CD8-positive, alpha-beta T cell (primary cell): ENCODE measurements at regions of chr15 and their contacts with region 1.

Region 1: GRCh38 chr15:75453703-75454470 is 2.4 kb upstream of the SIN3A start:
- DNase-seq: peak; percentile 93 to 100 (median 95)
- ATAC-seq: peak; percentile 39
- H3K4me3 ChIP-seq: peak overlapping the region; percentile 86 to 96
- H3K4me3 Mint-ChIP-seq: peak overlapping the region; percentile 92
- H3K27ac ChIP-seq: peak overlapping the region; percentile 83 to 92
- H3K27ac Mint-ChIP-seq: peak overlapping the region; percentile 99
- H3K4me1 ChIP-seq: peaks cover 23% of the 10 kb centered on the region
- H3K4me1 Mint-ChIP-seq: peaks cover 37% of the 10 kb centered on the region
- H3K27me3 ChIP-seq: no peaks in the 10 kb centered on the region
- H3K27me3 Mint-ChIP-seq: no peaks in the 10 kb centered on the region
- CTCF ChIP-seq: no peak

Region 2: GRCh38 chr15:73927476-73928240 is 1526.2 kb before region 1 on chr15:
- CTCF ChIA-PET with region 1: no interaction called
- POLR2A ChIA-PET with region 1: no interaction called
- intact Hi-C with region 1: loop called in 1 of 2 experiments (anchors 5 kb)
- DNase-seq: peak; percentile 56 to 87 (median 77)
- ATAC-seq: peak; percentile 88
- H3K4me3 ChIP-seq: peak overlapping the region; percentile 49 to 79
- H3K4me3 Mint-ChIP-seq: peak overlapping the region; percentile 79
- H3K27ac ChIP-seq: peak overlapping the region in 1 of 2 experiments; percentile 41
- H3K27ac Mint-ChIP-seq: peak overlapping the region; percentile 20
- H3K4me1 ChIP-seq: peaks cover 27% of the 10 kb centered on the region
- H3K4me1 Mint-ChIP-seq: peaks cover 38% of the 10 kb centered on the region
- H3K27me3 ChIP-seq: no peaks in the 10 kb centered on the region
- H3K27me3 Mint-ChIP-seq: no peaks in the 10 kb centered on the region
- CTCF ChIP-seq: peak; percentile 83

Region 3: DNA sequence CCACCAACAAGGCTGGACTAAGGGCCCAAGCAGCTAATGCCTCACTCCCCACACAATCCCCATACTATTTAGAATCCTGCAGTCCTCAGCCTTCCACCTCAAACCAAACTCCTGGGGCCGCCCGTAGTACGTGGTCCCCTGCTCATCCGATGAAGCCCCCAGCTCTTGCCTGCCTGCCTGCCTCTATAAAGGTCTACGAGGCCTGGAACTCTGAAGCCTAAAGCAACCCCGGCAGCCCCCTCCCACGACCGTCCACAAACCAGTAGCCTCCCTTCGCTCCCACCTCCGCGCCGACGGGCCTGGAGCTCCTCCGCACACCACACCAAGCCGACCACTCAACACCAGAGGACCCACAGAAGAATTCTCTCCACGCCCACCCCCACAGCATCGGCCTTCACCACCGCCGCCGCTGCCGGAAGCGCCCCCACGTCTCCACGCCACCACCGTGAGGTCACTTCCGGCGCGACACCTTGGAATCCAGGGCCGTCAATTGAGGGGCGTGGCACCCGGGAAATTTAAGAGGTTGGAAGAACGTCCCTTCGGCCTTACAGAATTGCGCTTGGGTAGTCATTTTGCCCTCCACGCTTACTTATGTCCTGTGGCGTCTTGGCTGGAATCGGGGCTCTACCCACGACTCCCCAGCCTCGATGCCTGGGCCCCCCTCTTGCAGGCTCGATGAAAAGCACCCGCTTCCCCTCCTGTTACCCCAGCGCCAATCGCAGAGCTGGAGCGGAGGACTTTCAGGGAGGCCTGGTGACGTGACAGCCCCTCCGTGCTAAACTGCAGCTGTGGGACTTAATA is 758.1 kb before region 1 on chr15 and contains the start of gene EDC3:
- CTCF ChIA-PET with region 1: no interaction called
- POLR2A ChIA-PET with region 1: no interaction called
- intact Hi-C with region 1: loop called in 1 of 2 experiments (anchors 10 kb)
- DNase-seq: peak; percentile 72 to 94 (median 89)
- ATAC-seq: peak; percentile 88
- H3K4me3 ChIP-seq: peak within 1 kb of the TSS; percentile 79 to 93
- H3K4me3 Mint-ChIP-seq: peak within 1 kb of the TSS; percentile 100
- H3K27ac ChIP-seq: peak within 1 kb of the TSS; percentile 80 to 83
- H3K27ac Mint-ChIP-seq: peak within 1 kb of the TSS; percentile 99
- H3K4me1 ChIP-seq: peaks cover 14% of the 10 kb centered on the region
- H3K4me1 Mint-ChIP-seq: peaks cover 47% of the 10 kb centered on the region
- H3K27me3 ChIP-seq: peaks cover 0 to 1% of the 10 kb centered on the region in 2 experiments
- H3K27me3 Mint-ChIP-seq: no peaks in the 10 kb centered on the region
- CTCF ChIP-seq: no peak
- total RNA-seq, gene EDC3: 9.8 to 11.8 TPM

Region 4: GRCh38 chr15:74920456-74920855 is 533.4 kb before region 1 on chr15:
- CTCF ChIA-PET with region 1: no interaction called
- POLR2A ChIA-PET with region 1: no interaction called
- intact Hi-C with region 1: no loop called
- DNase-seq: no peak
- ATAC-seq: no peak
- H3K4me3 ChIP-seq: no peak overlapping the region
- H3K4me3 Mint-ChIP-seq: no peak overlapping the region
- H3K27ac ChIP-seq: no peak overlapping the region
- H3K27ac Mint-ChIP-seq: no peak overlapping the region
- H3K4me1 ChIP-seq: no peaks in the 10 kb centered on the region
- H3K4me1 Mint-ChIP-seq: no peaks in the 10 kb centered on the region
- H3K27me3 ChIP-seq: no peaks in the 10 kb centered on the region
- H3K27me3 Mint-ChIP-seq: no peaks in the 10 kb centered on the region
- CTCF ChIP-seq: no peak

Region 5: DNA sequence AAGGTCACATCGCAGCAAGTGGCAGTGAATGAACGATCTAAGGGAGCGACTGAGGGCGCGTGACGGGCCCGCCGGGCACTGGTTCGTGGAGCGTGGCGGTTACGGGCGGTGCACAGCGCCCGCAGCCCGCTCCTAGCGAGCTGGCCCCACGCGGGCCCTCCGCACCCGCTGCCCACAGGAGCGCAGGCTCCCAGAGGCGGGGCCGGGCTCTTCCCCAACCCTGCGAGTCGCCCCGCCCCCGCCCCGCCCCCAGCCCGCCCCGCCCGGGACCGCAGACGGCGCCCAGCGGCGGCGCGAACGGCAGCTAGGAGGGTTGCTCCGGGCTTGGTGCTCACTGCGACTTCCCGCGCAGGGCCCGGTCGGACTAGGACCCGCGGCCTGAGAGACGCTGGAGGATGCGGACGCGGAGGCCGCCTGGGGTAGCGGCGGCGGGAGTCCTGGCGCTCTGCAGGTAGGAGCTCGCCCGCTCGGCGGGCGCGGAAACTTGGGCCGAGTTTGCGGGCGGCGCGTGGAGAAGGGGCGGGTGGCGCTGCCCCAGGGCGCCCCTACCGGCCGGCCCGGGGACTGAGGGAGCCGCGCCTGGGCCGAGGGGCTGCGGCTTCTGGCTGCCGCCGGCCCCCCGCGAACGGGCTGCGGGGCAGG is 252.2 kb before region 1 on chr15 and contains the start of gene C15orf39:
- CTCF ChIA-PET with region 1: no interaction called
- POLR2A ChIA-PET with region 1: interaction called, 5 read pairs
- intact Hi-C with region 1: loop called in 1 of 2 experiments (anchors 2 kb)
- DNase-seq: peak; percentile 50 to 88 (median 72)
- ATAC-seq: peak; percentile 56
- H3K4me3 ChIP-seq: peak within 1 kb of the TSS; percentile 83 to 88
- H3K4me3 Mint-ChIP-seq: peak within 1 kb of the TSS; percentile 93
- H3K27ac ChIP-seq: peak within 1 kb of the TSS; percentile 82 to 85
- H3K27ac Mint-ChIP-seq: peak within 1 kb of the TSS; percentile 94
- H3K4me1 ChIP-seq: peaks cover 23% of the 10 kb centered on the region
- H3K4me1 Mint-ChIP-seq: peaks cover 47% of the 10 kb centered on the region
- H3K27me3 ChIP-seq: no peaks in the 10 kb centered on the region
- H3K27me3 Mint-ChIP-seq: no peaks in the 10 kb centered on the region
- CTCF ChIP-seq: peak; percentile 92
- total RNA-seq, gene C15orf39: 36.6 to 37.6 TPM

Region 6: DNA sequence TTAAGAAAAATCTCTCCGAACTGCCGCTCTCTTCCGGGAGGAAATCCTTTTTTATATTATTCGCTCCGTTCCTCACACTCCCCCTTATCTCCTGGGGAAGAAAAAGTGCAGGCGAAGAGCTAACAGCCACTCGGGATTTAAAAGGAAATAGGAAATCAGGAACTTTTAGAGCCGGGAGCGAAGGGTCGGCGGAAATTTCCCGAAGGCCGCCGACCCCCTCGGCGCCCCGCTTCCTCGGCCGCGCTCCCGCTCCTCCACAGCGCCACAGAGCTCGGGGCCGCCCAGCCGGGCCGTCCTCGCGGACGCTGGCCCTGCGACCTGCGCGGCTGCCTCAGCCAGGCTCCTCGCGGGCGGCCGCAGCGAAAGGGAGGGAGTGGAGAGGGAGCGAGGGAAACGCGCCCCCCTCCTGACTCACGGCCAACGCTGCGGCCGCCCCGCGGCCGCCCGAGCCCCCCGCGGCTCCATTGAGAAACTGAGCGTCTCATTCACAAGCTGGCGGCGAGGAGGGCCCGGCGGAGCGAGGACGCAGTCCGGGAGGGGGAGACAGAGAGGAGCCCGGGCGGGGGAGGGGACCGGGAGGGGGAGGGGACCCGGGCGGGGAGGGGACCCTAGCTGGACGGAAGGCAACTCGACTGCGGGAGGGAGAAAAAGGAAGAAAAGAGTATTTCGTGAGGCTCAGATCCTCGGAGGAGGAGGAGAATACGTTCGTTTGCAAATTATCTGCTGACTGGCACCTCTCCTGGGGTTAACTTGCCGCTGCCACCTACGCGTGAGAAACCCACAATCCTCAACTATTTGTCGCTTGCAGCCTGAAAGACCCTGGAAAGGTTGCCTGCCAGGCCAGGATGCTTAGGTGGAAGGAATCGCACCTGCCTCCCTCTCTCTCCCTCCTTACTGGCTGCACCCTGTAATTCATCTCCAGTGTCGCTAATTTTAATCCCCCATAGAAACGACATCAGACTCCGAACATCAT is 125.3 kb after region 1 on chr15 and contains the start of gene PTPN9:
- CTCF ChIA-PET with region 1: interaction called, 5 read pairs
- POLR2A ChIA-PET with region 1: interaction called, 10 read pairs
- intact Hi-C with region 1: loop called in 1 of 2 experiments (anchors 1 kb)
- DNase-seq: peak; percentile 24 to 81 (median 68)
- ATAC-seq: peak; percentile 83
- H3K4me3 ChIP-seq: peak within 1 kb of the TSS; percentile 77 to 83
- H3K4me3 Mint-ChIP-seq: peak within 1 kb of the TSS; percentile 94
- H3K27ac ChIP-seq: peak within 1 kb of the TSS; percentile 25 to 73
- H3K27ac Mint-ChIP-seq: peak within 1 kb of the TSS; percentile 86
- H3K4me1 ChIP-seq: peaks cover 14% of the 10 kb centered on the region
- H3K4me1 Mint-ChIP-seq: peaks cover 23% of the 10 kb centered on the region
- H3K27me3 ChIP-seq: no peaks in the 10 kb centered on the region
- H3K27me3 Mint-ChIP-seq: no peaks in the 10 kb centered on the region
- CTCF ChIP-seq: peak; percentile 43
- total RNA-seq, gene PTPN9: 4.8 to 5.6 TPM

Region 7: GRCh38 chr15:75842722-75843551 is 389.1 kb after region 1 on chr15 and contains the start of gene UBE2Q2:
- CTCF ChIA-PET with region 1: no interaction called
- POLR2A ChIA-PET with region 1: interaction called, 11 read pairs
- intact Hi-C with region 1: loop called in 1 of 2 experiments (anchors 5 kb)
- DNase-seq: peak; percentile 13 to 86 (median 75)
- ATAC-seq: peak; percentile 62
- H3K4me3 ChIP-seq: peak within 1 kb of the TSS; percentile 72 to 73
- H3K4me3 Mint-ChIP-seq: peak within 1 kb of the TSS; percentile 90
- H3K27ac ChIP-seq: peak within 1 kb of the TSS; percentile 58 to 59
- H3K27ac Mint-ChIP-seq: peak within 1 kb of the TSS; percentile 93
- H3K4me1 ChIP-seq: peaks cover 26% of the 10 kb centered on the region
- H3K4me1 Mint-ChIP-seq: peaks cover 45% of the 10 kb centered on the region
- H3K27me3 ChIP-seq: no peaks in the 10 kb centered on the region
- H3K27me3 Mint-ChIP-seq: no peaks in the 10 kb centered on the region
- CTCF ChIP-seq: no peak
- total RNA-seq, gene UBE2Q2: 28.5 to 30.4 TPM